Activated CD4-positive, alpha-beta T cell treated with anti-CD3 and anti-CD28 coated beads, Interleukin-2, amount 10 ng/mL, durations not matched to agents 7 days and 5 days (primary cell): ENCODE measurements at regions of chr15 and their contacts with region 1.

Region 1: DNA sequence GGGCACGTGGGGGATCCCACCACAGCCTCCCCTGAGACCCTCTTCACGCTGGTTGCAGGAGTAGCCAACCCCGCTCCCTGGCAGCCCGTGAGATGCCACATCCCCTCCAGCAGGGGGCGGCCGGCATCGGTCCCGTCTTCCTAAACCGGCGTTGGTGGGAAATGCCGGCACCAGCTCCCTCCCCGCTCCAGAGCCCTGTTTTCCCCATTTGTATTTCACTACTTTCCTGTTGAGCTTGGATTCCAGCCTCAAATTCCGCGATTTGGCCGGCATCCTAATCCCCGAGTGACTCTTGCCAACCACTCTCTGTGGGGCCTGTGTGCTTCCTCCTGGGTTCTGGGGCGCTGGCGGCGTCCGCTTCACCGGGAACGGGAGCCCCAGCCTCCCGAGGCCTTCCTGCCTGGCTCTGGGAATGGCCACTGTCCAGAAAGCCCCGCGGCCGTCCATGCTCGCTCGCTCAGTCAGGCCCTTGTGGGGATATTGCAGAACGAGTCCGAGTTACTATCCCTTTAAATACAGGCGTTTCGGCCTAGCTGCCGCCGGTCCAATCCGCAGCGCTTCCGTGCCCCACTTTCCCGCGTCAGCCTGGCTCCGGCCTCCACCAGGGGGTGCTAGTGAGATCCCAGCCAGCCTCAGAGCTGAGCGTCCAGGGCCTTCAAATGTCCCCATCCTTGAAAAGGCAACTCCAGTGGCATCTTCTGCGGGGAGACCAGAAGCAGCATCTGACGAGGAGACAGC is 8.1 kb upstream of the ADAMTS17 start:
- DNase-seq: peak; percentile 88
- H3K4me3 Mint-ChIP-seq: peak overlapping the region; percentile 85
- H3K27ac Mint-ChIP-seq: peak overlapping the region; percentile 84
- H3K4me1 Mint-ChIP-seq: peaks cover 10% of the 10 kb centered on the region
- H3K27me3 Mint-ChIP-seq: peaks cover 8% of the 10 kb centered on the region

Region 2: DNA sequence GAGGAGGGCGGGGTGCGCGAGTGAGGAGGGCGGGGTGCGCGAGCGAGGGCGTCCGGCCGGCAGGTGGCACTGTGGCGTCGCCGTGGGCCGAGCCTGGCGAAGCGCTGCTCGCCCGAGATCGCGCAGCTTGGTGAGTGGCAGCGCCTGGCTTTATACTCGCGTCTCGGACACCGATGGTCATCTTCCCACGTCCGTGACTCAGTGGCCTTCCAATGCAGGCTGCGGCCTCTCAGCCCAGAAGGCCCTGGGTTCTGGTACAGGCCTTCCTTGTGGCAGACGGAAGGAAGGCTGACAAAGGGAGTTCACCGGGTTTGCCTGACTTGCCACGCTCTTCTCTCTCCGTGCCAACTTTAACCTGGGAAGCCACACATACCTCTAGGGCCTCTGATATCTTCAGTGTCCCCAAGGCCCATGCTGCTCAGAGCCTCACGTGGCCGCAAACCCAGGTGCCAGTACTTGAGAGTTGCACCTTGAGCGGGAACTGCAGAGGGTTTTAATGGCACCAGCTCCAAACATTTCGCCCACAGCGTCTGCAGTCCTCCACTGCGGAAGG is 421.4 kb before region 1 on chr15:
- CTCF ChIA-PET with region 1: interaction called, 12 read pairs
- POLR2A ChIA-PET with region 1: no interaction called
- DNase-seq: peak; percentile 82
- H3K4me3 Mint-ChIP-seq: peak overlapping the region; percentile 86
- H3K27ac Mint-ChIP-seq: peak overlapping the region; percentile 92
- H3K4me1 Mint-ChIP-seq: peaks cover 16% of the 10 kb centered on the region
- H3K27me3 Mint-ChIP-seq: peaks cover 6% of the 10 kb centered on the region

Region 3: GRCh38 chr15:100330629-100331215 is 19.1 kb before region 1 on chr15:
- CTCF ChIA-PET with region 1: interaction called, 117 read pairs
- POLR2A ChIA-PET with region 1: no interaction called
- DNase-seq: peak; percentile 70
- H3K4me3 Mint-ChIP-seq: peak overlapping the region; percentile 61
- H3K27ac Mint-ChIP-seq: peak overlapping the region; percentile 92
- H3K4me1 Mint-ChIP-seq: peaks cover 71% of the 10 kb centered on the region
- H3K27me3 Mint-ChIP-seq: no peaks in the 10 kb centered on the region

Region 4: DNA sequence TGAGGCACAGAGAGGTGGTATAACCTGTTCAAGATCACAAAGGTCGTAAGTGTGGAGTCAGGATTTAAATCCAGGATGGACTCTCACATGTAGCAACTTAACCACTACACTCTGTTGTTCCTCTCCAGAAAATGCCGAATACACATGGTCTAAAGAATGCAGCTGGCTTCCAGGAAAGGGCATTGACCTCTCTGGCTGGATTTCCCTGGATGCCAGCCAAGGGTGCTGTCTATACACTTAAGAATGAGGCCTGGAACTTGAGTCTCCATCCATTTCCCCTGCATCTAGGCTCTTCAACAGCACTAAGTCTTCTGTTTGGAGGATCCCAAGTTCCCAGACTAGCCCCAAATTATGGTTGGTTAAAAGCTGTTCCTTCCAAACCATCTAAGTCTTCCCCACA is 118.4 kb after region 1 on chr15:
- CTCF ChIA-PET with region 1: no interaction called
- POLR2A ChIA-PET with region 1: no interaction called
- DNase-seq: no peak
- H3K4me3 Mint-ChIP-seq: no peak overlapping the region
- H3K27ac Mint-ChIP-seq: no peak overlapping the region
- H3K4me1 Mint-ChIP-seq: peaks cover 11% of the 10 kb centered on the region
- H3K27me3 Mint-ChIP-seq: no peaks in the 10 kb centered on the region

Region 5: DNA sequence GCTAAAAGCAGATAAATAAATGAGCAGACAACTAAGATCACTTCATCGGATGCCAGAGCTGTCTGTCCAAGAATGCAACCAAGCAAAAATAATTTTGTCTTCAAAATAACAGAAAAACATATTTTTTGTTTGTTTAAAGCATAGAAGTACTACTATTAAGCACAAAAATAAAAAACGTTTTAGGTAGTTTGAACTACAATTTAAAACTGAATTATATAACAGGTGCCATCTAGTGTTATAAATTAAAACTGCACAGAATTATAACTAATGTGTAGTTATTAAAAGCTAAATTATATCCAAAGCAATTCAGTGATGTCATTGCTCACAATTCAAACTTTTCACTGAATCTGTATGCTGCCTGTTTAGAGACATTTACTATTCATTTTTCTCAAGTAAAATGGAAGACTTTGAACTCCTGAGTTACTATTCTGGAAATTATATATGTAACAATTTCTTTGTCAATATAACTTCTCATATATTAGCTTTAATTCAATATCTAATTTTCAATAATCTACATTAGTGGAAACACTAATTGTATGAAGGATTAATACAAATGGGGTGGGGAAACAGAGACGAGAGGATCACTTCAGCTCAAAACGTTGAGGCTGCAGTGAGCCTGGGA is 222.6 kb after region 1 on chr15:
- CTCF ChIA-PET with region 1: interaction called, 15 read pairs
- POLR2A ChIA-PET with region 1: interaction called, 3 read pairs
- DNase-seq: no peak
- H3K4me3 Mint-ChIP-seq: peak overlapping the region; percentile 48
- H3K27ac Mint-ChIP-seq: peak overlapping the region; percentile 92
- H3K4me1 Mint-ChIP-seq: peaks cover 58% of the 10 kb centered on the region
- H3K27me3 Mint-ChIP-seq: no peaks in the 10 kb centered on the region

Region 6: GRCh38 chr15:100596792-100597191 is 246.9 kb after region 1 on chr15:
- CTCF ChIA-PET with region 1: interaction called, 17 read pairs
- POLR2A ChIA-PET with region 1: no interaction called
- DNase-seq: peak; percentile 97
- H3K4me3 Mint-ChIP-seq: peak overlapping the region; percentile 73
- H3K27ac Mint-ChIP-seq: peak overlapping the region; percentile 99
- H3K4me1 Mint-ChIP-seq: peaks cover 75% of the 10 kb centered on the region
- H3K27me3 Mint-ChIP-seq: no peaks in the 10 kb centered on the region

Region 7: DNA sequence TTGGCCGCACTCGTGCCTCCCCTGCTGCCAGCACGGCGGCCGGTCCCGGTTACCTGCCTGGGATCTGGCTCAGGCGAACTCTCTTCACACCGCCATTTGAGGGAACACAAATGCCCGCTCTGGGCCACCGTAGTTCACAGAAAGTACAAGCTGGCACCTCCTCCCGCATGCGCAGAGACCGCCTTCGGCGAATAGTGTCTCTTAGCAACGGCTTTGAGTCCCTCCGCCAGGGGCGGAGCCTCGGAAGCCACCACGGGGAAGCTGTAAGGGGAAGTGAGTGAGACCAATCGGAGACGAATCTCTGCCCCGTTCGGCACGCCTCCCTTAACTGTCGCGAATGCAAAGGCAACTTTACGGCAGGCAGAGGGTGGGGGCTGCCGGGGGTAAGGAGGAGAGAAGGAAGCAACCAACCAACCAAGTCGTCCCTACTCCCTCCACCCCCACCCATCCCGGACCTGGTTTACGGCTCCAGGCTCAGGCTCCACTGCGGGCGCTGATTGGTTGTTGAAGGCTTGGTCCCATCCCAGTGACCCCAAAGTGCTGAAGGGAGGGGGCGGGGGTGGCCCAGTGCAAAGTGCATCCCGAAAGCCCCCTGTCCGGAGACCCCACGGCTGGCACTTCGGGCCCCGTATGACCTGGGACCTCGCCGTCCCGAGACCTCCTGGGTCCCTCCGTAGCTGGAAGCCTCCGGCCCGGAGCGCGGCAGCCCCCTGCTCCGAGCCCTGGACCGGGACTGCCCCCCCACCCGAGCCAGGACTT is 252.4 kb after region 1 on chr15 and contains the starts of genes ASB7 and LINS1:
- CTCF ChIA-PET with region 1: interaction called, 17 read pairs
- POLR2A ChIA-PET with region 1: no interaction called
- DNase-seq: peak; percentile 100
- H3K4me3 Mint-ChIP-seq: no peak within 1 kb of the TSS
- H3K27ac Mint-ChIP-seq: peak within 1 kb of the TSS; percentile 95
- H3K4me1 Mint-ChIP-seq: peaks cover 60% of the 10 kb centered on the region
- H3K27me3 Mint-ChIP-seq: no peaks in the 10 kb centered on the region
- total RNA-seq, gene ASB7: 21.3 to 22.8 TPM
- total RNA-seq, gene LINS1: 74.2 to 79.2 TPM